ENCODE measurements at regions of chr1 and their contacts with region 1.

Region 1: GRCh38 chr1:24502709-24503058 is at the start of gene RCAN3:
- DNase-seq: peak; percentile 79 to 95 (median 92)
- ATAC-seq: peak; percentile 61 to 63
- H3K4me3 Mint-ChIP-seq: peak within 1 kb of the TSS; percentile 80 to 99 (median 98)
- H3K27ac Mint-ChIP-seq: peak within 1 kb of the TSS; percentile 96 to 100 (median 98)
- H3K4me1 Mint-ChIP-seq: peaks cover 38 to 66% (median 62%) of the 10 kb centered on the region in 4 donors
- H3K27me3 Mint-ChIP-seq: peaks cover 0 to 4% (median 0%) of the 10 kb centered on the region in 5 donors
- polyA plus RNA-seq, gene RCAN3: 103 to 152 (median 150) TPM

Region 2: DNA sequence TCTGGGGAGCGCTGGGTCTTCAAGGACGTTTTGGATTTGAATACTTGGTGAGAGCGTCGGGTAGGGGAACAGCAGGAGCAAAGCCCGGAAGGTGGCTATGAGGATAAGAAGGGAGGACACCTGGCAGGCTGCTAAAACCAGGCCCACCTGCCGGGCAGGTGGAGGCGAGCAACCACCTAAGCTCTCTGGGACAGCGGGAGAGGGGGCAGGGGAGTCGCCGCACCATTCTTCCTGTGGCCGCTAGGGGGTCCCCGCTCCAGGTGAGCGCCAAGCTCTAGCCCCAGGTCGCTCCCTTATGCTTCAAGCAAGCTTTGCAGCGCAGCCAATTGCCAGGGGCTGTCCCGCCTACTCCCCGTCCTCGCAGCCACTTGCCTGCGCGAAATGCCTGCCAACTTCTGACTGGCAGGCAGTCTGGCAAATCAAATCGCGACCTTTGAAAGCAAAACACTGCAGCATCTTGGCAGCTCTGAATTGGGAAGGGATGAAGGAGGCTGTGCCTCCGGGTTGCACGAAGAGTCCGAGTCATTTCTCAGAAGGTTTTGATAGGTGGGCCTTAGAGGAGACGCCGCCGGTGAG is 87.3 kb before region 1 on chr1 and contains the start of gene NIPAL3:
- POLR2A ChIA-PET with region 1: interaction called, 183 read pairs
- DNase-seq: peak; percentile 91 to 99 (median 97)
- ATAC-seq: peak; percentile 93
- H3K4me3 Mint-ChIP-seq: peak within 1 kb of the TSS; percentile 92 to 100 (median 98)
- H3K27ac Mint-ChIP-seq: peak within 1 kb of the TSS; percentile 86 to 98 (median 95)
- H3K4me1 Mint-ChIP-seq: peaks cover 38 to 88% (median 72%) of the 10 kb centered on the region in 4 donors
- H3K27me3 Mint-ChIP-seq: no peaks in the 10 kb centered on the region
- polyA plus RNA-seq, gene NIPAL3: 57.5 to 90.4 (median 89.5) TPM

Region 3: DNA sequence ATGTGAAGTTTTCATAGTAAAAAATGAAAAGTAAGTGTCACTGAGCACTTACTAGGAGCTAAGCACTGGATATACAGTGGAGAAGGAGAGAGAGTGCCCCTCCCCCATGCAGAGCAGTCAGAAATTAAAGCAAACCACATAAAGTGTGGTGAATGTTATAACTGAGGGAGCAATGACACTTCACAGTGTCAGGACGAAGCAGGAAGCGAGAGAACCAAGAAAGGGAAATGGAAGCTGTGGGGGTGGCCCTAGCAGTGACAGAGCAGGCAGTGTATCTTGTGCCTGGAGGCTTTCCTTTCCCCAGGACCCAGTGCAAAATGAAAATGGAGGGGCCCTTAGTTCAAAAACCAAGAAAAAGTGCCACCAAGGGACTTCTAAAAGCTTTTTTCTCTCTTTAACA is 21.6 kb before region 1 on chr1:
- POLR2A ChIA-PET with region 1: interaction called, 930 read pairs
- DNase-seq: peak in 8 of 10 donors; percentile 51 to 80 (median 62)
- ATAC-seq: peak; percentile 59 to 68
- H3K4me3 Mint-ChIP-seq: peak overlapping the region; percentile 60 to 89 (median 82)
- H3K27ac Mint-ChIP-seq: peak overlapping the region; percentile 87 to 100 (median 98)
- H3K4me1 Mint-ChIP-seq: peaks cover 23 to 79% (median 71%) of the 10 kb centered on the region in 4 donors
- H3K27me3 Mint-ChIP-seq: no peaks in the 10 kb centered on the region

Region 4: DNA sequence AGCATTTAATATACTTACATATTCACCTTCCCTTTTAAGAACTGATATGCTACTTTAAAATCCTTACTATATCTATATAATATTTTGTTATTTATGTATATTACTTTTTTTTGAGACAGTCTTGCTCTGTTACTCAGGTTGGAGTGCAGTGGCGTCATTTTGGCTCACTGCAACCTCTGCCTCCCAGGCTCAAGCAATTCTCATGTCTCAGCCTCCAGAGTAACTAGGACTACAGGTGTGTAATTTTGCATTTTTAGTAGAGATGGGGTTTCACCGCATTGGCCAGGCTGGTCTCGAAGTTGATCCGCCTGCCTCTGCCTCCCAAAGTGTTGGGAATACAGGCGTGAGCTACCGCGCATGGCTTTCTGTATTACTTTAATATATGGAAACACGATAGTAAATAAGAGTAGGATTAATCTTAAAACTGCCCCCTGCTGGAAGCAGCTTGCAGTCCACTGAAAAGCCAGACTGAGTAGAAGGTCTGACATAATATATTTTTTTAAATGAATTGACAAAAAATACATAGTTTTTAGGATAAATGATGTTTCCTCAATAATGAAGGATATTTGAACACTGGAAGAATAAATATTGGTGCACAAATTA is 24.4 kb after region 1 on chr1:
- POLR2A ChIA-PET with region 1: interaction called, 77 read pairs
- DNase-seq: peak in 9 of 10 donors; percentile 15 to 76 (median 56)
- ATAC-seq: peak; percentile 76 to 83
- H3K4me3 Mint-ChIP-seq: peak overlapping the region in 6 of 10 donors; percentile 26 to 72 (median 42)
- H3K27ac Mint-ChIP-seq: peak overlapping the region; percentile 66 to 96 (median 89)
- H3K4me1 Mint-ChIP-seq: peaks cover 35 to 74% (median 71%) of the 10 kb centered on the region in 4 donors
- H3K27me3 Mint-ChIP-seq: no peaks in the 10 kb centered on the region

Region 5: GRCh38 chr1:24558902-24559791 is 56.5 kb after region 1 on chr1:
- POLR2A ChIA-PET with region 1: no interaction called
- DNase-seq: no peak
- ATAC-seq: no peak
- H3K4me3 Mint-ChIP-seq: no peak overlapping the region
- H3K27ac Mint-ChIP-seq: peak overlapping the region in 2 of 10 donors; percentile 41 to 76
- H3K4me1 Mint-ChIP-seq: peaks cover 13 to 29% (median 20%) of the 10 kb centered on the region in 4 donors
- H3K27me3 Mint-ChIP-seq: peaks cover 0 to 9% (median 0%) of the 10 kb centered on the region in 5 donors

Region 6: DNA sequence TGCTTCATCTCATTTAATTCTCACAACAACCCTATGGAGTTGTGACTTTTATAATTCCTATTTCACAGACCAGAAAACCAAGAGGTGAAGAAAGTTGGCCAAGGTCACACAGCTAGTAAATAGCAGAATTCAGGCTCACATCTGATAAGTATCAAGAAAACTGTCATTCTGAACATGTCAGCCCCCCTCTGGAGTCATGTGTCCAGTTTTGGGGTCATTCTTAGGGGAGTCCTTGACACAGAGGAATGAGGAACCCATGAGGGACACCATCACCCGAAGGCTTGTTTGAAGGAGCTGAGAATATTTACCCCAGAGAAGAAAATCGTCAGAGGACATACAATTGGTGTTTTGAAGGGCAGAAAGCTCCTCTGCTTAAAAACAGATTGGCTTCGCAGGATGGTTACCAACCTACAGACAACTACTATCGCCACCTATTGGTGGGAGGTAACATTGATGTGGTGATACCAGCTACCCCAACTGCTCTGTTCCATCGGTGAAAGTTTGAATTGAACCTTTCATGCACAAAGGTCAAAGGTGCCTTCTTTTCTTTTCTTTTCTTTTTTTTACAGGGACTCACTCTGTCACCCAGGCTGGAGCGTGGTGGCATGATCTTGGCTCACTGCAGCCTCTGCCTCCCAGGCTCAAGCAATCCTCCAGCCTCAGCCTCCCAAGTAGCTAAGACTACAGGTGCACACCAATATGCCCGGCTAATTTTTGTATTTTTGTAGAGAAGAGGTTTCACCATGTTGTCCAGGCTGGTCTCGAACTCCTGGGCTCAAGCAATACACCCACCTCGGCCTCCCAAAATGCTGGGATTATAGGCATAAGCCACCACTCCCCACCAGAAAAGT is 84.5 kb after region 1 on chr1:
- POLR2A ChIA-PET with region 1: interaction called, 20 read pairs
- DNase-seq: peak in 9 of 10 donors; percentile 36 to 82 (median 74)
- ATAC-seq: peak; percentile 100
- H3K4me3 Mint-ChIP-seq: peak overlapping the region in 4 of 10 donors; percentile 15 to 53 (median 26)
- H3K27ac Mint-ChIP-seq: peak overlapping the region; percentile 55 to 94 (median 90)
- H3K4me1 Mint-ChIP-seq: peaks cover 9 to 10% (median 9%) of the 10 kb centered on the region in 4 donors
- H3K27me3 Mint-ChIP-seq: no peaks in the 10 kb centered on the region

Region 7: DNA sequence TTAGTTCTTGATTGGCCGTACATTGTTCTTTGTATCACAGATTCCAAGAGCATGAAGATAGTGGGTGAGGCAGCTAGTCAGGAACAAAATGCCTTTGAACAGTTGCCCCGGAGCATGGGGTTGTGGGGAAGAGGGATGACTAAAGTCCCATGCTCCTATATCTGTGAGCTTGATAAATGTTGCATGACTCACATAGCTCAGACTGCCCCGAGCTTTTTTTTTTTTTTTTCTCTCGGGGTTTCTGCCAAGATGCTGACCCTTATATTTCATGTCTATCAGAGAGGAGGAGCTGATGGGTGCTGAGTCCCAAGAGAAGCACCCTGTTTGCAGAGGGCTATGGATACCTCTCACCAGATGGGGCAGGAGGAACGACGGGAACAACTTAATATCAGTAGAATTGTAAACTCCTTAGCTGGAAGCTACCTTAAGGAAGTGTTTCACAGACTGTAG is 181.1 kb after region 1 on chr1:
- POLR2A ChIA-PET with region 1: no interaction called
- DNase-seq: no peak
- ATAC-seq: no peak
- H3K4me3 Mint-ChIP-seq: no peak overlapping the region
- H3K27ac Mint-ChIP-seq: peak overlapping the region in 2 of 10 donors; percentile 58 to 68
- H3K4me1 Mint-ChIP-seq: peaks cover 3 to 5% (median 4%) of the 10 kb centered on the region in 4 donors
- H3K27me3 Mint-ChIP-seq: no peaks in the 10 kb centered on the region

Measured in naive thymus-derived CD8-positive, alpha-beta T cell (primary cell).